Common myeloid progenitor, CD34-positive (primary cell): ENCODE measurements at regions of chr3 and their contacts with region 1.

Region 1: GRCh38 chr3:51670823-51671733 is at the start of gene TEX264:
- DNase-seq: peak; percentile 92 to 95 (median 94)
- H3K4me3 ChIP-seq: peak within 1 kb of the TSS; percentile 61 to 94 (median 87)
- H3K27ac ChIP-seq: peak within 1 kb of the TSS in 1 of 2 experiments; percentile 73
- H3K4me1 ChIP-seq: peaks cover 0 to 54% (median 41%) of the 10 kb centered on the region in 4 experiments
- H3K27me3 ChIP-seq: no peaks in the 10 kb centered on the region

Region 2: DNA sequence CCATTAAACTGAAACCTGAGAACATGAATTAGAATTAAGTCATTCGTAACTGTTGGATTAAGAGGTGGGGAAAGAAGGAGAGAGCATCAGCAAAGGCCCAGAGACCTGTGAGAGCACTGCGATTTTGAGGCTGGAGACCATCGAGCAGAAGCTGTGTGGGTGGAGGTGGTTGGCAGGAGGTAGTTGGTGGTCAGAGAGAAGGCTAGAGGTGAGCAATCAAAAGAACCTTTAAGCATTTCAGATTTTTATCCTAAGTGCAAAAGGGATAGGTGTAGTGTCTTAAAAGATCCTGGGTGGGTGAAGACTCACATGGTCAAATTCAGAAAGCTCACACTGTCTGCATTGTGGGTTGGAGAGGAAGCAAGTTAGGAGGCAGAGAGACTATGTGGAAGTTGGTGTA is 65.1 kb before region 1 on chr3:
- CTCF ChIA-PET with region 1: no interaction called
- POLR2A ChIA-PET with region 1: no interaction called
- DNase-seq: no peak
- H3K4me3 ChIP-seq: no peak overlapping the region
- H3K27ac ChIP-seq: peak overlapping the region in 1 of 2 experiments; percentile 11
- H3K4me1 ChIP-seq: peaks cover 0 to 8% (median 3%) of the 10 kb centered on the region in 4 experiments
- H3K27me3 ChIP-seq: no peaks in the 10 kb centered on the region

Region 3: DNA sequence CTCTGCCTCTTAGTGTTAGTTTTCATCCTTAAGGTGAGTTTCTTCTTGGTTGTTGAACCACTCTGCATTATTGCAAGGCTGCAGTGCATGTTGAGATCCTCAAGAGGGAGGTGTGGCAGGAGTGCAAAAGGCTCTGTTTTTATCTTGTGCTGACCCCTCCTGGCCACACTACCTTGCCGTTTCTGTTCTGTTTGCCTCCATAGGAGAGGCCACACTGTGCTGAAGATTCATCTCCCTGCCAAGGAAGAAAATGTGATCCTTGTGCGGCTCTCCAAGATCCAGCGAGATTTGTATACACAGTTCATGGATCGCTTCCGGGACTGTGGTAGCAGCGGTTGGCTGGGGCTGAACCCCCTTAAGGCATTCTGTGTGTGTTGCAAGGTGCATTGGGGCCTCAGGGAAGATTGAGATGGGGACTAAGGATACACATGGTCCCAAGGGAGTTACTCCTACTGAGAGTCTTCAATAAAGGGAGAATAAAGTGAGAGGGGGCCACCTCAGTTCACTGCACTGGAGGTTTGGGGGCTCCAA is 33.1 kb before region 1 on chr3:
- CTCF ChIA-PET with region 1: interaction called, 46 read pairs
- POLR2A ChIA-PET with region 1: no interaction called
- DNase-seq: peak; percentile 84 to 89 (median 85)
- H3K4me3 ChIP-seq: no peak overlapping the region
- H3K27ac ChIP-seq: no peak overlapping the region
- H3K4me1 ChIP-seq: no peaks in the 10 kb centered on the region
- H3K27me3 ChIP-seq: no peaks in the 10 kb centered on the region

Region 4: DNA sequence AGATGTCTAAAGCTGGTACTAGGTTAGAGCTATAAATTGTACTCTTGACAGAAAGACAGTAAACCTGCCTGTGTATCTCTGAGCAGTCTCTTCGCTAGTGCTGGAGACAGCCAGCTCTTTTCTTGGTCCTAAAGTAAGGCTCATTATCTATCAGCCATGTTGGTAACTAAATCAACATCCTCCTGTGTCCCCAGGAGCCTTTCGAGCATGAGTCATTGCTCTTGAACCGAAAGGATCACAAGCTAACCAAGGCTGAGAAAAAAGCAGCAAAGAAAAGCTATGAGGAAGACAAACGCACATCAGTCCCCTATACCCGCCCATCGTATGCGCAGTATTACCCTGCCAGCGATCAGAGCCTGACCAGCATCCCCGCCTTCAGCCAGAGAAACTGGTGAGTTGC is 25.0 kb before region 1 on chr3:
- CTCF ChIA-PET with region 1: interaction called, 46 read pairs
- POLR2A ChIA-PET with region 1: no interaction called
- DNase-seq: no peak
- H3K4me3 ChIP-seq: no peak overlapping the region
- H3K27ac ChIP-seq: no peak overlapping the region
- H3K4me1 ChIP-seq: no peaks in the 10 kb centered on the region
- H3K27me3 ChIP-seq: no peaks in the 10 kb centered on the region

Region 5: DNA sequence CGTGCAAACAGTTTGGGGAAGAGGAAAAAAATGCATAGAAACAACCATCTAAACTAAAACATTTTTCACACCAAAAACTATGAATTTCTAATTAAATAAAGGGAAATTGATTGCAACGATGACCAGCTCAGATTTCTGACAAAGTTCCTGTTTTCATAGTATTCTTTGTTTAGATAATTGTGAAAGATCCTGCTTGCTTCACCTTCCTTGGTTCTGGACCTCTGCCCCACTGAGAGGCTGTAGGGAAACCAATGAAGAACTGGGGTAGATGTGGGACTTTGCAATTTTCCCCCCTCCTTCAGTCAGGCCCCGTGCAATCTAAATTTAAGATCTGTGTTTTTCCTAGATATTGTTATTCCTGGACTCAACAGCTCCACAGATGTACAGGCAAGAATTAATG is 13.8 kb before region 1 on chr3:
- CTCF ChIA-PET with region 1: interaction called, 20 read pairs
- POLR2A ChIA-PET with region 1: no interaction called
- DNase-seq: no peak
- H3K4me3 ChIP-seq: no peak overlapping the region
- H3K27ac ChIP-seq: no peak overlapping the region
- H3K4me1 ChIP-seq: no peaks in the 10 kb centered on the region
- H3K27me3 ChIP-seq: no peaks in the 10 kb centered on the region

Region 6: GRCh38 chr3:51682079-51682478 is 11.0 kb after region 1 on chr3:
- CTCF ChIA-PET with region 1: interaction called, 214 read pairs
- POLR2A ChIA-PET with region 1: no interaction called
- DNase-seq: peak; percentile 82 to 89 (median 87)
- H3K4me3 ChIP-seq: peak overlapping the region in 5 of 7 experiments; percentile 1 to 53 (median 31)
- H3K27ac ChIP-seq: no peak overlapping the region
- H3K4me1 ChIP-seq: peaks cover 12 to 74% (median 68%) of the 10 kb centered on the region in 4 experiments
- H3K27me3 ChIP-seq: no peaks in the 10 kb centered on the region